ENCODE measurements at regions of chr11 and their contacts with region 1.

Region 1: DNA sequence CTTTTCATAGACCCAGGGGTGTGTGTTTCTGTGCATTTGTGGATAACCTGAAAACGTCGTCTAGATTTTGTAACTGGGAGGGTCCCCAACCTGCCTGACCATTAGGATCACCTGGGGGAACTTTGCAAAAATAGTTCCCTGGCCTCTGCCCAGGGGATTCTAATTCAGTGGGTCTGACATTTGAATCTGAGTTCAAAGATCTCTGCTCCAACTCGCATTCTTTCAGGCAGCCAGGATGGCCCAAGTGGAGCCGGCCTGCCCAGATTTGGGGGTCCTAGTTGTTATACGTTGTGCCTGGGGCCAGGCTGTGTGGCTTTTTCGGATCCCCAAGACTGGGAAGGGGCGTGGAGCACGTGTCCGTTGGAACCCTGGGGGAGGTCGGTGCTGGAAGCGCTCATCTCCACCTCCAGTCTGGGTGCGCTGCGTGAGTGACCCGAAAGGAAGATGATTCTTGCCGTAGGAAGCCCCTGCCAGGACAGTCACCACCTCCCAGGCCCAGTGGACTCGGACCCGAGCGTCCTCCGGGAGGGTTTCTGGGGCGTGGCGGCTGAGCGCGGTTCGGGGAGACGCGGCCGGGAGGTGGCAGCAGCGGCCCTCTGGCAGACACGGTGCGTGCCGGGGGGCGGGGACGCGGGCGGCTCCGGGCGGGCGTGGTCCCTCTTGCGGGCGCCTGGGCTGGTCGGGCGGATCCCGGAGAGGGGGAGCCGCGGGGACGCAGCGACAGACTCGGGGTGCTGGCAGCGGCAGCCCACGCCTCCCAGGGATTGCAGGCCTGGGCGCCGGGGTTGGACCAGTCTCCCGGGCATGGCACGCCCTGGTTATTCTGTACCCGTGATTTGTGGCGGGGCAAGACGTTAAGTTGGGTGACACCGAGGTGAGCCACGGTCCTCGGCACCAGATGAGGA is 29.2 kb upstream of the PLET1 start:
- DNase-seq: peak; percentile 73 to 89
- ATAC-seq: peak; percentile 94 to 98 (median 97)
- H3K4me3 ChIP-seq: peak overlapping the region; percentile 36
- H3K4me3 Mint-ChIP-seq: peak overlapping the region; percentile 73
- H3K27ac ChIP-seq: no peak overlapping the region
- H3K27ac Mint-ChIP-seq: peak overlapping the region; percentile 28 to 38
- H3K4me1 ChIP-seq: peaks cover 11% of the 10 kb centered on the region
- H3K4me1 Mint-ChIP-seq: peaks cover 12 to 13% of the 10 kb centered on the region in 2 donors
- H3K27me3 ChIP-seq: no peaks in the 10 kb centered on the region
- H3K27me3 Mint-ChIP-seq: peaks cover 4 to 6% of the 10 kb centered on the region in 2 donors
- CTCF ChIP-seq: peak; percentile 79

Region 2: DNA sequence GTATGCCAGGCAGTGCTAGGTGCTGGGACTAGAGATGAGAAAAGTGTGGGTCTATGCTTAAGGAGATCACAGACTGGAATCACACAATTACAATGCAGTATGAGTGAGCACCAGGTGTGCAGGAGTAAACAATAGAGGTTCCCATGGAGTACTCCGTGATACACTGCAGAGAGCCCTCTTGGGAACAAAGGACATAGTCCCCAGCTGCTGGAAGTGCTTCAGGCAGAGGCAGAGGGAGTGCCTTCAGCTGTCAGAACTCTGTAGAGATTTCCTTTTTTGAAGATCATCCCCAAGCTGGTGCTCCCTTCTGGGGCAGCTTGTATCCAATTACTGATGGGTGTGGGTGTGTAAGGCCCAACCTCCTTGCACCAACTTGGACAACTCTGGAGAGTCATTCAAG is 114.3 kb after region 1 on chr11:
- intact Hi-C with region 1: no loop called
- DNase-seq: no peak
- ATAC-seq: no peak
- H3K4me3 ChIP-seq: no peak overlapping the region
- H3K4me3 Mint-ChIP-seq: no peak overlapping the region
- H3K27ac ChIP-seq: no peak overlapping the region
- H3K27ac Mint-ChIP-seq: no peak overlapping the region
- H3K4me1 ChIP-seq: no peaks in the 10 kb centered on the region
- H3K4me1 Mint-ChIP-seq: no peaks in the 10 kb centered on the region
- H3K27me3 ChIP-seq: no peaks in the 10 kb centered on the region
- H3K27me3 Mint-ChIP-seq: peaks cover 3 to 7% of the 10 kb centered on the region in 2 donors
- CTCF ChIP-seq: no peak

Region 3: DNA sequence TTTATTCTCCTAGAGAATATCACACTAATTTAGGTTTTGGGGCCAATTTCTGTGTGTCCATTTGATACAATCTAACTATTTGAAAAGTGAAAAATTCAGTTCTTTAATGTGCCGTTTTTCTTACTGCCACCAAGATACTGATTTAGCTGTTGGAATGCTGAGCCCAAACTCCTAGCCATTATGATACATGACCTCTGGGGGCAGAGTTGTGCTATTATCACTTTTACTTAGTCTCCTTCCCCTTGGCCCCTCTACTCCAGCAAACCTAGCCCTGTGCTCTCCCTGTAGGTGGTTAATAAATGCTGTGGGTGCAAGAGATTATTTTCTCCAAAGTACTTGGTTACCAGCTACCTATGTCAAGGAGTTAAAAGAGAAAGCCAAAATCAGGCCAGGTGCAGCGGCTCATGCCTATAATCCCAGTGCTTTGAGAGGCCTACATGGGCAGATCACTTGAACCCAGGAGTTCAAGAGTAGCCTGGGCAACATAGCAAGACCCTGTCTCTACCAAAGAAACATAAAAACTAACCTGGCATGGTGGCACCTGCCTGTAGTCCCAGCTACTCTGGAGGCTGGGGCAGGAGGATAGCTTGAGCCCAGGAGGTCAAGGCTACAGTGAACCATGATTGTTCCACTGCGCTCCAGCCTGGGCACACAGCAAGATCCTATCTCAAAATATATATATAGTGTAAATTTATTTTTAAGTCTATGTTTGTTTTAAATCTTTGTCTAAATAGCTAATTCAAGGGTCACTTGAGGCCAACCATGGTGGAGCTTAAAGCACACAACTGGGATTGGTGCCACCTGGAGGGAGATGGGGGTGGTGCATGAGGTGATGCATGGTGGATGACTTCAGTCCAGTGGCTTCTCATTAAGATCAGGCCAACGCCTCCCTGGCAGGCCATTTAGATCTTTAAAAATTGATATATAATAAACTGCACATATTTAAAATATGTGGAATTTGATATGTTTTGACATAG is 164.0 kb after region 1 on chr11:
- intact Hi-C with region 1: loop called (anchors 1 kb)
- DNase-seq: peak in 1 of 2 donors; percentile 59
- ATAC-seq: peak; percentile 26 to 70 (median 50)
- H3K4me3 ChIP-seq: no peak overlapping the region
- H3K4me3 Mint-ChIP-seq: no peak overlapping the region
- H3K27ac ChIP-seq: no peak overlapping the region
- H3K27ac Mint-ChIP-seq: no peak overlapping the region
- H3K4me1 ChIP-seq: no peaks in the 10 kb centered on the region
- H3K4me1 Mint-ChIP-seq: no peaks in the 10 kb centered on the region
- H3K27me3 ChIP-seq: no peaks in the 10 kb centered on the region
- H3K27me3 Mint-ChIP-seq: peaks cover 9 to 29% of the 10 kb centered on the region in 2 donors
- CTCF ChIP-seq: peak; percentile 57

Measured in natural killer cell (primary cell).